Mammary epithelial cell (primary cell): ENCODE measurements at regions of chr9 and their contacts with region 1.

Region 1: GRCh38 chr9:111759762-111760639 is 34.7 kb downstream of the SHOC1 start:
- DNase-seq: peak; percentile 69
- H3K4me3 ChIP-seq: no peak overlapping the region
- H3K27ac ChIP-seq: peak overlapping the region; percentile 8
- H3K4me1 ChIP-seq: no peaks in the 10 kb centered on the region
- H3K27me3 ChIP-seq: no peaks in the 10 kb centered on the region
- CTCF ChIP-seq: peak; percentile 59 to 61

Region 2: DNA sequence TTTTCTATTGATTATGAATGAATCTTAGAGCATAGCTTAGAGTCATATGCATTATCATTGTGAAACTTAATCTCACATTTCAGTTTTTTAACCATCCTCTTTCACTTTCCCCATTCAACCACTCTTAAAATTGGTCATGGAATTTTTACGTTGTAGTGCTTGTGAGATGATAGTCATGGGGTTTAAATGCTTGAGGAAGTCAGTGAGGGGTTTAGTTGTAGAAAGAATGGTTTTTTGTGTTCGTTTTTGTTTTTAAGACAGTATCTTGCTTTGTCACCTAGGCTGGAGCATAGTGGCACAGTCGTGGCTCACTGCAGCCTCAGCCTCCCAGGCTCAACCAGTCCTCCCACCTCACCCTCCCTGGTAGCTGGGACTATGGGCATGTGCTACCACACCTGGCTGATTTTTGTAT is 156.2 kb after region 1 on chr9:
- CTCF ChIA-PET with region 1: no interaction called
- dilution Hi-C with region 1: no loop called
- in situ Hi-C with region 1: loop called in 1 of 2 experiments (anchors 25 kb)
- intact Hi-C with region 1: no loop called
- DNase-seq: no peak
- H3K4me3 ChIP-seq: no peak overlapping the region
- H3K27ac ChIP-seq: no peak overlapping the region
- H3K4me1 ChIP-seq: peaks cover 6% of the 10 kb centered on the region
- H3K27me3 ChIP-seq: no peaks in the 10 kb centered on the region
- CTCF ChIP-seq: no peak

Region 3: GRCh38 chr9:111975709-111976108 is 215.7 kb after region 1 on chr9:
- CTCF ChIA-PET with region 1: no interaction called
- dilution Hi-C with region 1: no loop called
- in situ Hi-C with region 1: no loop called
- intact Hi-C with region 1: loop called (anchors 1 kb)
- DNase-seq: no peak
- H3K4me3 ChIP-seq: no peak overlapping the region
- H3K27ac ChIP-seq: no peak overlapping the region
- H3K4me1 ChIP-seq: peaks cover 17% of the 10 kb centered on the region
- H3K27me3 ChIP-seq: no peaks in the 10 kb centered on the region
- CTCF ChIP-seq: peak in 1 of 2 donors; percentile 40

Region 4: DNA sequence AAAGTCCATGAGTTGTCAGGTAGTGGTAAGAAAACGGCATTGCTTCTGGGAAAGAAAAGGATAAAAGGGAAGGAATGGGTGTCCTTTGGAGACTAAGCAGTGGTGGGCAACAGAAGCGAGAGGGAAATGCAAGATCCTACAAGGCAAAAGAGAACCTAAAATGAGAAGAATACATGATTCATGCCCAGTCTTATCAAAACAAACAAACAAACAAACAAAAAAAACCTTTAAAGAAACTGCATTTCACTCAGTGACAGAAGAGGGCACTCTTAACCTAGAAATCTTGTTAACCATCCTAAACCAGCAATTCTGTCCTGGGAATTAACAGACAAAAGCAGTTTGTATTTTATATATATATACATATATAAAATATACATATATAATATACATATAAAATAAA is 326.6 kb after region 1 on chr9:
- CTCF ChIA-PET with region 1: no interaction called
- dilution Hi-C with region 1: no loop called
- in situ Hi-C with region 1: loop called in 1 of 2 experiments (anchors 5 kb)
- intact Hi-C with region 1: no loop called
- DNase-seq: no peak
- H3K4me3 ChIP-seq: no peak overlapping the region
- H3K27ac ChIP-seq: no peak overlapping the region
- H3K4me1 ChIP-seq: no peaks in the 10 kb centered on the region
- H3K27me3 ChIP-seq: no peaks in the 10 kb centered on the region
- CTCF ChIP-seq: peak; percentile 41 to 48